Activated B cell treated with CpG ODN at 0.5 μM for 24 hours (primary cell): ENCODE measurements at regions of chrX and their contacts with region 1.

Region 1: DNA sequence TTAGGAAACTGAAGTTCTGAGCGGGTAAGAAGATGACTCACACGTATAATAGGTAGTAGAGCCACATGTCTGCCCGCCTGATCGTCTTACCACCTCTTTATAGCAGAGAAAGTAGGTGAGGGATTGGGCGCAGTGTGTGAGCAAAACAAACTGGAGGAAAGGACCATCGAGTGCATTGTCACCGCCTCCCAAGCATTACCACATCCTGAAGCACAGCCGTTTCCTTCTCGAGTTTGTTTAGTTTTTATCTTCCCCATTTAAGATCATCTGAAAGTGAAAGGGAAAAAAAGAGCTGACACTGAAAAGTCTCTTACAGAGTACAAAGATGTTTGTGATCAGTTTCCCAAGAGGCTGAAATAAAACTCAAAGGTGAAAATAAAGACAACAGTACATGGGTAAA is 14.8 kb downstream of the PDK3 start:
- DNase-seq: no peak
- ATAC-seq: peak; percentile 94
- H3K4me3 Mint-ChIP-seq: peak overlapping the region; percentile 76
- H3K27ac Mint-ChIP-seq: peak overlapping the region; percentile 94
- H3K4me1 Mint-ChIP-seq: peaks cover 51% of the 10 kb centered on the region
- H3K27me3 Mint-ChIP-seq: no peaks in the 10 kb centered on the region
- CTCF ChIP-seq: no peak

Region 2: DNA sequence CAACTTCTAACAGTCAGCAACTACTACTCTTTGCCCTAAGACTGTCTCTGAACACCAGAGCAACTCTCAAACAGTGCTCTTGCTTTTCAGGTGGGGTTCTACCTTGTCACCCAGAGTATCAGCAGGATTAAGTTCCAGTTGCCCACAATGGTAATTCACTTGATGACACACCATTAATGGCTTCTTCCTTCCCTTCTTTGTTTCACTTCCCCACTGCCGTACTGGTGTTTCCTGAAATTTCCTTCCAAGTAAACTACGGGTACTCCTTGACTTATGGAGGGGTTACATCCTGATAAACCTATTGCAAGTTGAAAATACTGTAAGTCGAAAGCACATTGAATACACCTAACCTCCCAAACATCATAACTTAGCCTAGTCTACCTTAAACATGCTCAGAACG is 51.4 kb before region 1 on chrX:
- CTCF ChIA-PET with region 1: no interaction called
- POLR2A ChIA-PET with region 1: no interaction called
- intact Hi-C with region 1: no loop called
- DNase-seq: no peak
- ATAC-seq: no peak
- H3K4me3 Mint-ChIP-seq: no peak overlapping the region
- H3K27ac Mint-ChIP-seq: no peak overlapping the region
- H3K4me1 Mint-ChIP-seq: peaks cover 4% of the 10 kb centered on the region
- H3K27me3 Mint-ChIP-seq: peaks cover 3% of the 10 kb centered on the region
- CTCF ChIP-seq: no peak

Region 3: GRCh38 chrX:24444645-24445044 is 35.3 kb before region 1 on chrX:
- CTCF ChIA-PET with region 1: no interaction called
- POLR2A ChIA-PET with region 1: no interaction called
- intact Hi-C with region 1: no loop called
- DNase-seq: no peak
- ATAC-seq: no peak
- H3K4me3 Mint-ChIP-seq: no peak overlapping the region
- H3K27ac Mint-ChIP-seq: no peak overlapping the region
- H3K4me1 Mint-ChIP-seq: no peaks in the 10 kb centered on the region
- H3K27me3 Mint-ChIP-seq: no peaks in the 10 kb centered on the region
- CTCF ChIP-seq: no peak

Region 4: GRCh38 chrX:24464836-24465531 is 14.9 kb before region 1 on chrX and contains the start of gene PDK3:
- CTCF ChIA-PET with region 1: no interaction called
- POLR2A ChIA-PET with region 1: interaction called, 38 read pairs
- intact Hi-C with region 1: loop called (anchors 1 kb)
- DNase-seq: peak; percentile 77
- ATAC-seq: peak; percentile 95
- H3K4me3 Mint-ChIP-seq: peak within 1 kb of the TSS; percentile 84
- H3K27ac Mint-ChIP-seq: peak within 1 kb of the TSS; percentile 83
- H3K4me1 Mint-ChIP-seq: peaks cover 47% of the 10 kb centered on the region
- H3K27me3 Mint-ChIP-seq: no peaks in the 10 kb centered on the region
- CTCF ChIP-seq: no peak
- total RNA-seq, gene PDK3: 13.6 and 13.9 TPM in 2 replicates